GM10248 (cell line): ENCODE measurements at regions of chr6 and their contacts with region 1.

Region 1: GRCh38 chr6:11744753-11745152 is 33.9 kb downstream of the ADTRP start:
- DNase-seq: no peak
- CTCF ChIP-seq: no peak

Region 2: DNA sequence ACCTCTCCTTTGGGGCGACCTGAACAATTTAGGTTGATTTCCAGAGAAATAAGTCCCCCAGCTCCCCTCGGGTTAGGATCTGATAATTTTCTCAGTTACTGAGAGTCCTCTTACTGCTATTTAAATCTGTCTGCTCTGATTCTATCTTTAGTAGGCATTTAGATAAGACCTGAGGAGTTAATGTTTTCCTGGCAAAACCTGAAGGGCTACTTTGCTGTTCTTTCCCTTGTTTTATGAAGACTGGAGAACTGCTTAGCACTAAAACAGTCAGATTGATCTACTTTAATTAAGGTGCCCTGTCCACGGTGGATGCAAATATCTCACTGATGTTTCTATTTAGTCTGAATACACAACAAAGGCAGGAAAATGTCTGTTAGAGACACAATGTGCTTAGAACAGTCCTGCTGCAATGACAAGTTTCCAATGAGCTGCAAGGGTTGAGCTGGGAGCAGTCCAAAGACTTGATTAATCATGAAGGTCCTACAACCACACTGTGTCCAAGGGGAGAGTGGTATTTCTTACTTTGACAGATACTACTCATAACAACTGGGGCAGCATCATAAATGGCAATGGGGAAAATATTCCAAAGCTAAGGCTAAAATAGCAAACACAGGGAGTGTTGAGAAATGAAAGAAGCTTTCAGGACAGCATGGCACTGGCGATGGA is 18.2 kb after region 1 on chr6:
- CTCF ChIA-PET with region 1: interaction called, 12 read pairs
- POLR2A ChIA-PET with region 1: no interaction called
- DNase-seq: no peak
- CTCF ChIP-seq: no peak

Region 3: DNA sequence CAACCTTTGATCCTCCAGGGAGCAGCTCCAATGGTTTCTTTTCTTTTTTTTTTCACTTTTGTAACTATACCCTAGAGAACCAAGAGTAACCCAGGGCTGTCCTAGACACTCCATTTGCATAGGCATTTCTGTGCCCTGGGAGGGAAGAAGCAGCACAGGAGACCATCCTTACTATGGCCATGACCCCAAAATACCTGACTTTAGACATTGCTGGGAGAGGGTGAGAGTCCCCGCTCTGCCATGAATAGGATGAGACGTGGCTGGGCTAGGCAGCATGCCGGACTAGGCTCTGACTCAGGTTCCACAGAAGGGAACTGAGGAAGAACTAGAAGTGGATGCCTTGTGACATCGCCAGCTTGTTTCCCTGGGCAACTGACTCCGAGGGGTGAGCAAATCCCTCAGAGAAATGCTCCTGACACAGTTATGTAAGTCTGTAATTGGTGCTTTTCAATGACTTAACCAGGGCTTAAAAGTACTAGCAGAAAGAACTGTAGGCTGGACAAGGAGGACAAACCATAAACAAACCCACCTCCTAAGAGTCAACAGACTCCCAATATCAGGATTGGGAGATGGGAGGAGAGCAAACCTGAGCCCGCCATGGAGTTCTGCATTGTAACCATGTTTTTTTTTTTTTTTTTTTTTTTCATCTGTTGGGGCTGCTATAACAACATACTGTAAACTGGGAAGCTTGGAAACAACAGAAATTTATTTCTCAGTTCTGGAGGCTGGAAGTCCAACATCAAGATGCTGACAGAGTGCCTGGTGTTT is 34.8 kb after region 1 on chr6:
- CTCF ChIA-PET with region 1: interaction called, 10 read pairs
- POLR2A ChIA-PET with region 1: no interaction called
- DNase-seq: no peak
- CTCF ChIP-seq: no peak